ENCODE measurements at regions of chr16 and their contacts with region 1.

Region 1: GRCh38 chr16:54929090-54930004 is 1.3 kb upstream of the IRX5 start:
- DNase-seq: peak; percentile 97
- H3K4me3 Mint-ChIP-seq: peak overlapping the region; percentile 87
- H3K27ac Mint-ChIP-seq: peak overlapping the region; percentile 91
- H3K4me1 Mint-ChIP-seq: peaks cover 28% of the 10 kb centered on the region
- H3K27me3 Mint-ChIP-seq: peaks cover 64% of the 10 kb centered on the region

Region 2: GRCh38 chr16:53530046-53530445 is 1399.3 kb before region 1 on chr16:
- intact Hi-C with region 1: loop called (anchors 10 kb)
- DNase-seq: no peak
- H3K4me3 Mint-ChIP-seq: no peak overlapping the region
- H3K27ac Mint-ChIP-seq: no peak overlapping the region
- H3K4me1 Mint-ChIP-seq: peaks cover 10% of the 10 kb centered on the region
- H3K27me3 Mint-ChIP-seq: no peaks in the 10 kb centered on the region

Region 3: GRCh38 chr16:53703590-53704444 is 1225.5 kb before region 1 on chr16 and contains the starts of genes FTO and RPGRIP1L:
- intact Hi-C with region 1: loop called (anchors 2 kb)
- DNase-seq: peak; percentile 99
- H3K4me3 Mint-ChIP-seq: peak within 1 kb of the TSS; percentile 93
- H3K27ac Mint-ChIP-seq: peak within 1 kb of the TSS; percentile 92
- H3K4me1 Mint-ChIP-seq: peaks cover 16% of the 10 kb centered on the region
- H3K27me3 Mint-ChIP-seq: no peaks in the 10 kb centered on the region
- total RNA-seq, gene FTO: 60.8 and 61.1 TPM in 2 replicates
- total RNA-seq, gene RPGRIP1L: 9.9 and 10.0 TPM in 2 replicates

Region 4: GRCh38 chr16:53952215-53953208 is 976.8 kb before region 1 on chr16:
- intact Hi-C with region 1: loop called (anchors 10 kb)
- DNase-seq: peak; percentile 68
- H3K4me3 Mint-ChIP-seq: peak overlapping the region; percentile 70
- H3K27ac Mint-ChIP-seq: peak overlapping the region; percentile 58
- H3K4me1 Mint-ChIP-seq: peaks cover 41% of the 10 kb centered on the region
- H3K27me3 Mint-ChIP-seq: no peaks in the 10 kb centered on the region

Region 5: DNA sequence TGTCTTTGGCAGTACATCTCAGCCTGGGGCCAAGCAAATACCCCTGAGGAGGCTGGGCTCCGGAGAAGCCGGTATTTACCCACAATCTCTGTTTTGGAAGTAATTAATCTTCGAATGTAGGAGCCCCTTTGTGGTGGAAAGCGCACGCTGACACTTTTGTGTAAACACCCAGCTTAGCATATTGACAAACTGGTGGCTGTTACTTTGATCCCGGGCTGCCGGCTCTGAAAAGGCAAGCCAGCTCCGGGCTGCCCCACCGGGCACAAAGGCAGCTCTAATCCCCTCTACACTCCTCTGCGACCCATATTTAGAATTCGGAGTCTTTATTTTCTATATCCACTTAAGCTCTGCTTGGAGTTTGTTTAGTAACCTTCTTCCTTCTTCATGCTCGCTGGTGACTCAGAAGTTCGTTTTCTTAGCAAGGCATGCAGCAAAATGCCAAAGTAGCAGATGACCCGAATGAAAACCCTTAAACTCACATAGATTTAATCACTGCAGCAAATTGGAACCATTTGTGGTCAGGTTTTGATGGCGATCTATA is 498.8 kb before region 1 on chr16:
- intact Hi-C with region 1: loop called (anchors 10 kb)
- DNase-seq: no peak
- H3K4me3 Mint-ChIP-seq: no peak overlapping the region
- H3K27ac Mint-ChIP-seq: no peak overlapping the region
- H3K4me1 Mint-ChIP-seq: no peaks in the 10 kb centered on the region
- H3K27me3 Mint-ChIP-seq: peaks cover 20% of the 10 kb centered on the region